Panc1 (cell line): ENCODE measurements at regions of chr22 and their contacts with region 1.

Region 1: DNA sequence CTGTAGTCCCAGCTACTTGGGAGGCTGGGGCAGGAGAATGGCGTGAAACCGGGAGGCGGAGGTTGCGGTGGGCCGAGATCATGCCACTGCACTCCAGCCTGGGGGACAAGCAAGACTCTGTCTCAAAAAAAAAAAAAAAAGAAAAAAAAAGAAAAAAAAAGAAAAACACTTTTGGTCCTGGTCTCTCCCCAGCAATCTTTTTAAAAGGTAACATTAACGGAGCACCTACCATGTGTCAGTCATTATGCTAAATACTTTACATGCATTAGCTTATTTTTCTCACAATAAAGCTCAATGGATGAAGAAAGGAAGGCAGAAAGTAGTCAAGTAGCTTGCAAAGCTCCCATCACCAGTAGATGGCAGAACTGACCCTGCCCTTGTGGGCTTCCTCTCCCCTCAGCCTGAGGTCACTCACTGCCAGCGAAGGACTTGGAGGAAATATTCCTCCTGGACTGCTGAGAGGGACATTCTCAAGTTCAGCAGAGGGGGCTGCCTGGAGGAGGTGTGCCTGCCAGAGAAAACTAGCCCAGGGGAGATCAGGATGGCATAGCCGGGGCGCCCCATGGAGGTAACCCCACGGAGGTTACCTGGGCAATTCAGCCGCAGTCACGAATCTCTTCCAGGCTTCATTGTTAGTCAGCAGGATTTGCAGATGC is 15.5 kb downstream of the APOL3 start:
- DNase-seq: peak; percentile 17
- ATAC-seq: peak; percentile 88
- H3K4me3 ChIP-seq: no peak overlapping the region
- H3K27ac ChIP-seq: no peak overlapping the region
- H3K4me1 ChIP-seq: no peaks in the 10 kb centered on the region
- H3K27me3 ChIP-seq: no peaks in the 10 kb centered on the region
- CTCF ChIP-seq: peak; percentile 84

Region 2: GRCh38 chr22:36048911-36049677 is 95.9 kb before region 1 on chr22:
- CTCF ChIA-PET with region 1: no interaction called
- POLR2A ChIA-PET with region 1: no interaction called
- in situ Hi-C with region 1: no loop called
- intact Hi-C with region 1: no loop called
- DNase-seq: no peak
- ATAC-seq: no peak
- H3K4me3 ChIP-seq: no peak overlapping the region
- H3K27ac ChIP-seq: no peak overlapping the region
- H3K4me1 ChIP-seq: no peaks in the 10 kb centered on the region; the same call in 1 of the 2 replicates
- H3K27me3 ChIP-seq: no peaks in the 10 kb centered on the region
- CTCF ChIP-seq: no peak

Region 3: DNA sequence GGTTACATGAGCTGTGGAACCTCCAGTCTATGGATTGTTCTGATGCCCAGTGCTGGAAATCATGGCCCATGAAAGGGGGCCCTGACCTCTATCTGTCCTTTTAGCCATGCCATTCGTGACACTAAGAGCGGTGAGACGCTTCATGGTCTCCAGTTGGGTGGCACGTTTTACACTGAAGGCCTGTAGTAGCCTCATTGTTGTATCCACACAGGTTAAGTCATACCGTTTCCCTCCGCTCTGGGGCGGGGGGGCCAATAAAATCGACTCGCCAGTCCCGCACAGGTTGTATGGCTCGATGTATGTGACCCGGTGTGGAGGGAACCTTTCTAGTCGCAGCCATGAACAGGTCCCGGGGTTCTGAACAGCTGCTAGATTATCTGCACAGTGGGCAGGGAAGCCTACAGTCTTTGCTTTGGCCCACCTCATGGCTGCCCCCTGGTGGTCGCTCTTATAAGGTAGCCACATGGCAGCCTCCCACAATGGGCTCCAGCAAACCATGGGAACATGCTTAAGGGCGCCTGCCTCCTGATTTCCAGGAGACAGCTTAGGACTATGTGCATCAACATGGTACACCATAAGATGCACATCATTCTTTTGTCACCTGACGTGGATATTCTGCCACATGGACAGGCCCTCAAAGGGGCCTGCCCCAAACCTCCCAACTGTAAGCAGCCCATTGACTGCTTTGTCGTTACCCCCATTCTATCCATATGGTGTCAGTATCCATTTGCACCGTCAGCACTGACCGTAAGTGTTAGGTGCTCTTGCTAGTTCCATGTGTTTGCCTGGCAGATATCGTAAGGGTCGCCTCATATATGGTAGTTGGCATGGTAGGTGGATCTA is 35.2 kb after region 1 on chr22:
- CTCF ChIA-PET with region 1: interaction called, 4 read pairs
- POLR2A ChIA-PET with region 1: interaction called, 4 read pairs
- in situ Hi-C with region 1: no loop called
- intact Hi-C with region 1: loop called (anchors 2 kb)
- DNase-seq: peak; percentile 18
- ATAC-seq: peak; percentile 92
- H3K4me3 ChIP-seq: no peak overlapping the region
- H3K27ac ChIP-seq: no peak overlapping the region
- H3K4me1 ChIP-seq: no peaks in the 10 kb centered on the region
- H3K27me3 ChIP-seq: no peaks in the 10 kb centered on the region
- CTCF ChIP-seq: peak; percentile 84